ENCODE measurements at regions of chr9 and their contacts with region 1.

Region 1: DNA sequence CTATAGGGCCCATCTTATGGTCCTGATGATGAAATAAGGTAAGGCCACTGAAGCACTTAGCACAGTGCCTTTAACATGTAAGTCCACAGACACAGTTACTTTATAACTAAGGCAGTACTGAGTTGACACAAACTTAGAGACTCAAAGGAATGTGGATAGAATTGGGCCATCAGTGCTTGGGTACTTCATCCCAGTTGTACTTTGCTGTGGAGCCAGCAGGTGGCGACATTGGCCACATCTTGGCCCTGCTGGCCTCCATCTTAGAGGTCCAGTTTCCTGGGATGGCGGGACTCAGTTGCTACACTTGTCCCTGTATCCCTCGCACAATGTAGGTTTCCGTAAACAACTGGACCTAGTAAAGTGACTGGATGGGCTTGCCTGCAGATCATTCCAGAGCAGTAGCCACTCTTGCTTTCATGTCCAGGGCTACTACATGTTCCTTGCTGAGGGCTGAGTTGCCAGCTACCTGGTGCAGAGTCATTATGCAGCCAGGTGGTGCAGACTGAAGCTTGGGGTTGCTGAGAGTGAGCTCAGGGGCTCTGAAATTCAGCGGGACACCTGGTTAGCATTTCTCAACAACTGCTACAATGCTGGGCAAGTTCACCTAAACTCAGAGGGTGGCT is 10.6 kb downstream of the MTAP start:
- DNase-seq: peak; percentile 55 to 94
- H3K4me3 ChIP-seq: no peak overlapping the region
- CTCF ChIP-seq: no peak
- POLR2A ChIP-seq: no peak

Region 2: DNA sequence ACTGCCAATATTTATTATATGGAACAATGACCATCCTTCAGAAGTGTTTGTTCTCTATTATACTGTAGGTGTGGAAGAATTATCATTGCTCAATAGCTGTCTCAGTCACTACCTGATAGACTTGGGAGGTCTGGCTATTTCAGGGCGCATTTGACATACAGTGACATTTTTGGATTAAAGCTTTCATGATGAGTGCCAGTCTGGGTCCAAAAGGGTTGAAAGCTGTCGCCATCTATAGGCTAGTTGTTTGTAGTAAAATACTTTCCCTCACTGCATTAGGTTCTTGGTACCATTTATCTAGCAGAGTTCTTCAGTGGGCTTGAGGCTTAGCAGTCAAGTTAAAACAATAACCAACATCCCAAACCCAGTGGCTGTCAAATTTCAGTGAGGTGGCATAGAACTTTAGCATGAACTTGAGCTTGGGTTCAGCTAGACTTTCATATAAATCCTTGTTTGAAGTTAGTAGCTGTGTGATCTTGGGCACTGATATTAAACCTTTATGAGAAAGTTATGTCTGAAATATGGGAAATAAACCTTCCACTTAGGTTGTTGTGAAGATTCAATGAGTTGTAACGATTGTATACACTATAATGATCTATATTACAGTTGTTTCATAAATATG is 306.6 kb after region 1 on chr9:
- intact Hi-C with region 1: loop called (anchors 10 kb)
- DNase-seq: no peak
- H3K4me3 ChIP-seq: no peak overlapping the region
- CTCF ChIP-seq: no peak
- POLR2A ChIP-seq: no peak

Region 3: GRCh38 chr9:22238809-22239684 is 426.0 kb after region 1 on chr9:
- intact Hi-C with region 1: loop called (anchors 5 kb)
- DNase-seq: no peak
- H3K4me3 ChIP-seq: no peak overlapping the region
- CTCF ChIP-seq: no peak
- POLR2A ChIP-seq: no peak

Region 4: GRCh38 chr9:22446950-22447617 is 634.0 kb after region 1 on chr9:
- intact Hi-C with region 1: loop called (anchors 10 kb)
- DNase-seq: no peak
- H3K4me3 ChIP-seq: peak overlapping the region; percentile 29
- CTCF ChIP-seq: no peak
- POLR2A ChIP-seq: no peak